Common myeloid progenitor, CD34-positive (primary cell): ENCODE measurements at regions of chr17 and their contacts with region 1.

Region 1: DNA sequence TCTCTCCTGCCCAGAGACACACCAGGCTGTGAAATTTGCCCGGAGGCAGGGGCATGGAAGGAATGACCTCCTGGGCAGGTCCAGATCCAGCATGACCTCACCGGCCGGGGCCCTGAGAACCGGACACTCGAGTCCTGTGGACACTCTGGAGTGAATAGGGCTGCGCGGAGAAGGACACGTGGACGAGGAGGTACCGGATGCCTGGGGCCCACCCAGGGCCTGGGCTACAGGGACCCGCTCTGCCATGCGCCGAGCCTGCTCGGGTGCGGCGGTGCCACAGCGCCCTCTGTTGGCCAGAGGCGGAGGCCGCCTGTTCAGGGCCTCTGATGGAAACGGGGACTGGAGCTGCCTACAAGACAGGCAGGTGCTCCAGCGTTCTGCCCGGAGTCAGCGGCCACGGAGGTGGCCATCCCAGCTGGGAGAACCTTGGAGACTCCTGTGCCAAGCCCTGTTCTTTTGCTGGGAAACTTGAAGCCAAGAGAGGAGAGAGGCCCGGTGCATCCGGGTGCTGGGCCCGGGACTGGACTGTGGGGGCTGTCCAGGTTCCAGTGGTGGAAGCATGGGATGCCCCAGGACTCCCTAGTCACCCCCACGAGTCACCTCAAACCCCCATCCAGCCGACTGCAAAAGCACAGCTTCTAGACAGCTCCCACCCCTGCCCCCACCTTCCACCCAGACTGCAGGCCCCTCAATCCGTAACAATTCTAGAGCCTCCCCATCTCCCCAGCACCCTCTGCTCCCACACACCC is 19.3 kb upstream of the NXPH3 start:
- DNase-seq: peak; percentile 66 to 85 (median 83)
- H3K4me3 ChIP-seq: peak overlapping the region in 1 of 7 experiments; percentile 30
- H3K27ac ChIP-seq: no peak overlapping the region
- H3K4me1 ChIP-seq: peaks cover 0 to 7% (median 6%) of the 10 kb centered on the region in 4 experiments
- H3K27me3 ChIP-seq: peaks cover 0 to 2% (median 0%) of the 10 kb centered on the region in 5 experiments

Region 2: GRCh38 chr17:49407981-49408501 is 148.4 kb before region 1 on chr17:
- CTCF ChIA-PET with region 1: interaction called, 168 read pairs
- POLR2A ChIA-PET with region 1: interaction called, 3 read pairs
- DNase-seq: peak; percentile 82 to 91 (median 88)
- H3K4me3 ChIP-seq: peak overlapping the region in 1 of 7 experiments; percentile 14
- H3K27ac ChIP-seq: peak overlapping the region in 1 of 2 experiments; percentile 2
- H3K4me1 ChIP-seq: peaks cover 5 to 62% (median 57%) of the 10 kb centered on the region in 4 experiments
- H3K27me3 ChIP-seq: no peaks in the 10 kb centered on the region

Region 3: GRCh38 chr17:49496183-49496866 is 60.1 kb before region 1 on chr17:
- CTCF ChIA-PET with region 1: interaction called, 19 read pairs
- POLR2A ChIA-PET with region 1: no interaction called
- DNase-seq: peak; percentile 67 to 81 (median 79)
- H3K4me3 ChIP-seq: peak overlapping the region in 6 of 7 experiments; percentile 16 to 79 (median 53)
- H3K27ac ChIP-seq: no peak overlapping the region
- H3K4me1 ChIP-seq: peaks cover 0 to 32% (median 25%) of the 10 kb centered on the region in 4 experiments
- H3K27me3 ChIP-seq: peaks cover 17 to 60% (median 37%) of the 10 kb centered on the region in 5 experiments

Region 4: GRCh38 chr17:49545007-49545660 is 11.3 kb before region 1 on chr17:
- CTCF ChIA-PET with region 1: interaction called, 14 read pairs
- POLR2A ChIA-PET with region 1: no interaction called
- DNase-seq: no peak
- H3K4me3 ChIP-seq: no peak overlapping the region
- H3K27ac ChIP-seq: no peak overlapping the region
- H3K4me1 ChIP-seq: no peaks in the 10 kb centered on the region
- H3K27me3 ChIP-seq: no peaks in the 10 kb centered on the region

Region 5: DNA sequence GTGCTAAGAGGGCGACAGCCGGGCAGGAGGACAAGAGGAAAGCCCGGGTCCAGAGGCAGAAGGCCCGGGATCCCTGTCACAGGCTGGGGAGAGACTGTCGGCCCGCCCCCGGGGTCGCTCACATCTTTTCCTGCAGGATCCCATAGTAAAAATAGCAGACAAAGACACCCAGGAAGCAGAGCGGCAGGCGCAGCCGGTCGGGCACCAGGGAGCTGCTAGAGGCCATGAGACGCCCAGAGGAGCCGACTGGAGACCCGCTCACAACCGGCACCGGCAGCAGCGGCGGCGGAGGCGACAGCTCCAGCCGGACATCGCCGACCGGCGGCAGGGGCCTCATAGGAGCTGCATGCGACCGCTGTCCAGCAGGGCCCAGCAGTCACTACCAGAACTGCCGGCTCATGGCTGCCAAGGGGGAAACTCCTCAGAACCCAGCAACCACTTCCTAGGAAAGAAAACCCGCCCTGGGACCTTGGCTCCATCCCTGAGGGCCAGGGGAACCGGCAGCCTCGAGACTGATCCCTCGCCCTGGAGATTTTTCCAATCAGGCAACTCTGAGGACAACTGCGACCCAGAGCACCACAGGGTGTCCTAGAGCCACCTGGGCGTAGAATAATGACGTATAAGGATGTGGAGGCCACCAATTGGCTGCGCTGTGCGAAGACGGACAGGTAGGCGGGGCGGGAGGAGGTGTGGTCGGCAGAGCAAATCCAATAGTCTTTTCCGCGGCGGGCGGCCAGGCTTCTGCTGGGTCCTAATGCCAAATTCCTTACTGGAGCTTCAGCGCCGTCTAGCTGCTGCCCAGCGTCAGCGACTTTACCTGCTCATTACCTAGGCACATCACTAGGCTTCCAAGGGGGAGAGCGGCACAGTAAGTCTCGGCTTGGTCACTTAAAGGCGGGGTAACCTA is 151.5 kb after region 1 on chr17 and contains the start of gene SLC35B1:
- CTCF ChIA-PET with region 1: interaction called, 65 read pairs
- POLR2A ChIA-PET with region 1: no interaction called
- DNase-seq: peak; percentile 99 to 100 (median 100)
- H3K4me3 ChIP-seq: peak within 1 kb of the TSS; percentile 77 to 95 (median 87)
- H3K27ac ChIP-seq: peak within 1 kb of the TSS; percentile 98 to 99
- H3K4me1 ChIP-seq: peaks cover 6 to 52% (median 31%) of the 10 kb centered on the region in 4 experiments
- H3K27me3 ChIP-seq: no peaks in the 10 kb centered on the region